Activated CD4-positive, alpha-beta memory T cell treated with anti-CD3 and anti-CD28 coated beads for 36 hours (primary cell): ENCODE measurements at regions of chr1 and their contacts with region 1.

Region 1: DNA sequence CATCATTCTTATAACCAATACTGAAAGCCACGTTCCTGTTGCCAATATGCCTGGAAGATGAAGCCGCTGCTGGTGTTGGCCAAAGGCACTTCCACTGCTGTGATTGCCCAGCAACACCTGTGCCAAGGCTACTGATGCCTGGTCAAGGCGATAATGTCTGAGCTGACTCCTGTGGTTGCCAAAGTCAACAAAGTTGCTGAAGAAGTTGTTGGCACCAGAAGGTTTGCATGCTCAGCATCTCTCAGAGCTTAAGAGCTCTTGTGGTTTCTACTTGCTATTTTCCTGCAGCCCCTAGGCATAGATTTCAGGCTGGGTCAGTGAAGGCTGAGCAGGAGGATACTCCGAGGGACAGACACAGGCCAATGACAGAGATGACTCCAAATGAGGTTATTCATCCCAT is 63.4 kb upstream of the RAB3GAP2 start:
- DNase-seq: no peak
- H3K4me3 Mint-ChIP-seq: no peak overlapping the region
- H3K27ac Mint-ChIP-seq: no peak overlapping the region
- H3K4me1 Mint-ChIP-seq: no peaks in the 10 kb centered on the region
- H3K27me3 Mint-ChIP-seq: no peaks in the 10 kb centered on the region

Region 2: GRCh38 chr1:220389634-220390033 is 54.0 kb after region 1 on chr1:
- CTCF ChIA-PET with region 1: no interaction called
- POLR2A ChIA-PET with region 1: no interaction called
- intact Hi-C with region 1: loop called (anchors 5 kb)
- DNase-seq: no peak
- H3K4me3 Mint-ChIP-seq: no peak overlapping the region
- H3K27ac Mint-ChIP-seq: no peak overlapping the region
- H3K4me1 Mint-ChIP-seq: no peaks in the 10 kb centered on the region
- H3K27me3 Mint-ChIP-seq: peaks cover 15% of the 10 kb centered on the region